Activated CD4-positive, alpha-beta memory T cell treated with anti-CD3 and anti-CD28 coated beads for 36 hours (primary cell): ENCODE measurements at regions of chr5 and their contacts with region 1.

Region 1: GRCh38 chr5:98917433-98917832 is 11.4 kb downstream of the CHD1 start:
- DNase-seq: no peak
- H3K4me3 Mint-ChIP-seq: no peak overlapping the region
- H3K27ac Mint-ChIP-seq: no peak overlapping the region
- H3K4me1 Mint-ChIP-seq: peaks cover 72% of the 10 kb centered on the region
- H3K27me3 Mint-ChIP-seq: no peaks in the 10 kb centered on the region

Region 2: DNA sequence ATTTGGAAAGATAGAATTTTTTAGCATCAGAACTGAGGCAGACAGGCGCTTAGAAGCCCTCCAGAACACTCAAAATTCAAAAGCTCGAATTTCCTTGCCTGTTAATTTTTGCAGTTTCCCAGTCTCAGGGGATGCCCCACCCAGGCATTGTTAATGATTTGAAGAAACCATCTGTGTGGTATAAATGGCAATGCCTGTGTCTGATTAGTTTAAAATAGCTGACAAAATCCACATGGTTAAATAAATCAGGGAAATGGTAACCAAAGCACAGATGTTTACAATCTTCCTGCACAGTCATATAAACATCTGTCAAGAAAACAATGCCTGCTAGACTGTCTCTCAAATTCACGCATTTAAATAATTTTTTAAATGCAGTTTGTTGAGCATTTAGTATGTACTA is 329.2 kb before region 1 on chr5:
- CTCF ChIA-PET with region 1: no interaction called
- POLR2A ChIA-PET with region 1: no interaction called
- intact Hi-C with region 1: no loop called
- DNase-seq: no peak
- H3K4me3 Mint-ChIP-seq: no peak overlapping the region
- H3K27ac Mint-ChIP-seq: no peak overlapping the region
- H3K4me1 Mint-ChIP-seq: no peaks in the 10 kb centered on the region
- H3K27me3 Mint-ChIP-seq: peaks cover 2% of the 10 kb centered on the region

Region 3: DNA sequence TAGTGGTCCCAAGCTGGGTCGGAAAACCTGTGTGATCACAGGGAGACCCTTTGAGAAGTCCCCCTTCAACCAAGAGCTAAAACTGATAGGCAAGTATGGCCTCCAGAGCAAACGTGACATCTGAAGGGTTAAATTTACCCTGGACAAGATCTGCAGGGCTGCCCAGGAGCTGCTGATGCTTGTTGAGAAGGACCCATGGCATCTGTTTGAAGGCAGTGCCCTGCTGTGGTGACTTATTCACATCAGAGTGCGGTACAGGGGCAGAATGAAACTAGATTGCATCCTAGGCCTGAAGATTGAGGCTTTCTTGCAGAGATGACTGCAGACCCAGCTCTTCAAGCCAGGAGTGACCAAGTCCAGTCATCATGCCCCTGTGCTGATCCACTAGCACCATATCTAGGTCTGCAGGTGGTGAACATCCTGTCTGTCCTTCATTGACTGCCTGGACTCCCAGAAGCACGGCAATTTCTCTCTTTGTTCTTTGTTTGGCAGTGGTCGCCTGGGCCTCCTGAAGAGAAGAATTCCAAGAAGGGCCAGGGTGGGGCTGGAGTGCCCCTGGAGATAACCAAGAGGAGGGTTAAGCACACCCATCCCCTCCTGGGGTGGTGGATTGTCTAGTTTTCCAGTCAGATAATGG is 37.1 kb after region 1 on chr5:
- CTCF ChIA-PET with region 1: no interaction called
- POLR2A ChIA-PET with region 1: no interaction called
- intact Hi-C with region 1: loop called (anchors 5 kb)
- DNase-seq: no peak
- H3K4me3 Mint-ChIP-seq: no peak overlapping the region
- H3K27ac Mint-ChIP-seq: no peak overlapping the region
- H3K4me1 Mint-ChIP-seq: no peaks in the 10 kb centered on the region
- H3K27me3 Mint-ChIP-seq: no peaks in the 10 kb centered on the region